Body of pancreas (tissue), 4 donors: ENCODE measurements at regions of chr18 and their contacts with region 1.

Region 1: DNA sequence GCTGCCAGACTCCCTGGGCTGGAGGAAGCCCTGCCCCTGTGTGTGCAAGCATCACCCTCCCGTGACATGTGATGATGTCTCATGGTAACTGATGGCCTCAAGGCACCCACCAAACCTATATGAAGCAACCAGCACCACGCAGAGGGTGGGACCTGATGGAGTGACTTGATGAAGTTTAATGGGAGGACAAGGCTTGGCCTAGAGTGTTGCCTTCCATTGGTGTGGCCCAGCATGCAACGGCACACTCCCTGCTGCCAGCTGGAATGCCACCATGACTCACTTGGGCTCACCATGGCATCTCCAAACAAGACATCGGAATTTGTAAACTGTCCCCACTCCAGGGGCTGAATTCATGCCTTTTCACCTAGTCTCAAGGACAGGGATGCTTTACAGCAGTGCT is 8.6 kb upstream of the SLC14A1 start:
- DNase-seq: no peak
- ATAC-seq: no peak
- H3K4me3 ChIP-seq: no peak overlapping the region
- H3K27ac ChIP-seq: no peak overlapping the region
- H3K4me1 ChIP-seq: no peaks in the 10 kb centered on the region
- H3K27me3 ChIP-seq: no peaks in the 10 kb centered on the region
- CTCF ChIP-seq: no peak
- POLR2A ChIP-seq: no peak

Region 2: DNA sequence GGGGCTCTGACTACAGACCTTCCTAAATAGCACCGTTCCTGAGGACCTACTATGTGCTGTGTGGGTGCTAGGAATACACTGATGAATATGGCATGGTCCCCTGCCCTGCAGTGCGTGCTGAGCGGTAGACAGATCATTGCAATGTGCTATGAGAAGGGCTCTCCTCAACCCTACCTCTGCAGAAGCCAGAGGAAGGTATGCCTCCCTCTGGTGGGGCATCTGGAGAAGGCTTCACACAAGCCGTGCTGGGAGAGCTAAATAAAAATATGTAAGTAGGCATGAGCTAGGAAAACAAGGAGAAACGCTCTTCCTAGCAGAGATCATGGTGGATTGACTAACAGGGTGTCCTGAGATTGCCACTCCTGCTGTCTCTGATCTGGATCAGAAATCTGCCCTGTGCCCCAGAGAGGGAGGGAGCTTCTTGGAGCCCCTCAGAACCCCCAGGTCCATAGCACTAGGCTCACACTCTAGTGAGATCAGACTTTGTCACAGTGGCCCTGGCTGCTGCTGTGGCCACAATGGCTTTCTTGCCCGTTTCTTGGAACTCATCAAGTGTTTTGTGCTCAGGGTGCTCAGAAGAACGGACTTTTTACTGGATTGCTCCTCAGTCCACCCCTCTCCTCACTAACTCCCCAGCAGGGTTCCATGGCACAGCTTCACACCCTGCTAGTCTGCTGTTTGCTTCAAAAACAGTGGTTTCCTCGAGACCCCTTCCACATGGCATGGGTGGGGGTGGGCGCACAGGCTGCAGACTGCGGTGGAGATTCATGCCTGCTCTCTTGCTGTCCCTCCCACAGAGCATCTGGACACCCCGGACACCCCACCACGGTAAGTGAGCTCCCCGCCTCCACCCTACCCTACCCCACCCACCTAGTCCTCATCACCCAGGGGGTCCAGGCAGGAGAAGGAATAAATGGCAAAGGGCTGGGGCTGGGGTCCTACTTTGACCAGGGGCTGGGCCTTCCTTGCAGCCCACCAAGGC is 124.4 kb after region 1 on chr18:
- intact Hi-C with region 1: loop called (anchors 10 kb)
- DNase-seq: peak; percentile 43 to 48 (median 46)
- ATAC-seq: peak; percentile 60
- H3K4me3 ChIP-seq: no peak overlapping the region
- H3K27ac ChIP-seq: no peak overlapping the region
- H3K4me1 ChIP-seq: peaks cover 23% of the 10 kb centered on the region
- H3K27me3 ChIP-seq: peaks cover 0 to 6% of the 10 kb centered on the region in 2 donors
- CTCF ChIP-seq: peak; percentile 17 to 57 (median 47)
- POLR2A ChIP-seq: no peak

Region 3: DNA sequence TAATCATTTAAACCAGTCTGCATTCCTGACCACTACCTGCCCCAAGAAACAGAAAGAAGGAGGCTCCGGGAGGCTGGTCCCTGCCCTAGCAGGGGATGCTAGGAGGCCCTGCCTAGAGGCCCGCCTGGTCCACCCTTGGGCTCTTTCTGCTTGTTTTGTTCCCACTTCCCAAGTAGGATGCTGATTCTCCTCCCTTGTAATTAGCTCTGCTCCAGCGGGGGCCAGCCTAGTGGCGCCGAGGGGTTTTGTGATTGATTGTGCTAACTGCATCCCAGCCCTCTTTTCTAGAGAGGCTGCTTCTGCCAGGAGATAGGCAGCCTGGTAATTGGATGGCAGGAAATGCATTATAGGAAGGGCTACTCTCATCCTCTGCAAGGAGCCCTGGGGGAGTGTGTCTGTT is 721.7 kb after region 1 on chr18:
- intact Hi-C with region 1: no loop called
- DNase-seq: no peak
- ATAC-seq: no peak
- H3K4me3 ChIP-seq: no peak overlapping the region
- H3K27ac ChIP-seq: no peak overlapping the region
- H3K4me1 ChIP-seq: no peaks in the 10 kb centered on the region
- H3K27me3 ChIP-seq: peaks cover 0 to 7% of the 10 kb centered on the region in 2 donors
- CTCF ChIP-seq: no peak
- POLR2A ChIP-seq: no peak